ENCODE measurements at regions of chr5 and their contacts with region 1.

Region 1: GRCh38 chr5:172833686-172834414 is at the start of gene ERGIC1:
- DNase-seq: peak; percentile 82
- H3K4me3 ChIP-seq: peak within 1 kb of the TSS; percentile 80 to 96 (median 80)
- H3K27ac ChIP-seq: peak within 1 kb of the TSS; percentile 71
- H3K4me1 ChIP-seq: peaks cover 12% of the 10 kb centered on the region
- H3K27me3 ChIP-seq: no peaks in the 10 kb centered on the region
- CTCF ChIP-seq: no peak
- POLR2A ChIP-seq: peak; percentile 72
- total RNA-seq, gene ERGIC1: 105 and 118 TPM in 2 replicates

Region 2: DNA sequence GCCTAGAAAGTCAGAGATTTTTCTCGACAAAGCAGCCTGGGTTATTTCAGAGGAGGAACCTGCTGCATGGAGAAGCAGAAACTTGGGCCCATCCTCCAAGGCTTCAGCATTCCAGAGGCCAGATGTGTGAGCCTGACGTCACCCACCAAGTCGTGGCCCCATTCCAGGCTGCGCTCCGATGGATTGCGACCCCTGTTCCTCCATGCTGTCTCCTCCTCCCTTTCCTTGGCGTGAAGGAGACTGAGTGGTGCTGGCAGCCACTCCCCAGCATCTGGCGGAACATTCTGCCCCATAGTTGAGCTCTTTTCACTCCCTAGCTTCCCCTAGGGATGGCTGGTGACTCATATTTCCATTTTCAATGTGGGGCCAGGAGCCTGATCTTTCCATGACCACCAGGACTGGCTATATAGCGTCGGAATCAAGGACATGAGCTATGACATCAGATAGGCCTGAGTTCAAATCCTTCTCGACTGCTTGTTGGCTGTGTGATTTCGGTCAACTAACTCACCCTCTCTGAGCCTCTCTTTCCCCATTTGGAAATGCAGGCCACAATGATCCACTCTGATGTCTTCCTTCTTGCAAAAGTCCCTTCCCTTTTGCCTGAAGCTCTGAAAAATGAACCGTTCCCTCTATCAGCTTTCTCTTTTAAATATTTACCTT is 38.4 kb before region 1 on chr5:
- CTCF ChIA-PET with region 1: interaction called, 4 read pairs
- POLR2A ChIA-PET with region 1: no interaction called
- dilution Hi-C with region 1: no loop called
- intact Hi-C with region 1: loop called (anchors 1 kb)
- DNase-seq: peak; percentile 96
- H3K4me3 ChIP-seq: no peak overlapping the region
- H3K27ac ChIP-seq: peak overlapping the region; percentile 76
- H3K4me1 ChIP-seq: peaks cover 48% of the 10 kb centered on the region
- H3K27me3 ChIP-seq: no peaks in the 10 kb centered on the region
- CTCF ChIP-seq: no peak
- POLR2A ChIP-seq: no peak

Region 3: DNA sequence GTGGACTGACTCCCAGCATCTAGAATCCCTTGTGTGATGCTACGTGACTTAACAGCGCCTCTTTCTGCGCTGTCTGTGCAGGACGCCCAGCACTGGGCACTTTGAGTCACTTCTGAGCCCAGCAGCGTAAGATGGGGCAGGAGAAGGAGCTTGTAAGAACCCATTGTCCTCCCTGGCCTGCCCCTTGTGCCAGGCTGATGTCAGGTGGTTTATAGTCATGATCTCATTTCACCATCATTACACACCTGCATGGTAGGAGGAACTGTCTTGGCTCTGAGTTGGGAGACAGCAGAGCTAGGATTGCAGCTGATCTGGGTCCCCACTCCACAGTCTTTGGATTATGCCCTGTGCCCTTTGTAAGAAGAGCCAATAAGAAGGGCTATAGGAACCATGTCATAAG is 12.4 kb after region 1 on chr5:
- CTCF ChIA-PET with region 1: interaction called, 4 read pairs
- POLR2A ChIA-PET with region 1: no interaction called
- dilution Hi-C with region 1: no loop called
- intact Hi-C with region 1: loop called (anchors 1 kb)
- DNase-seq: no peak
- H3K4me3 ChIP-seq: no peak overlapping the region
- H3K27ac ChIP-seq: no peak overlapping the region
- H3K4me1 ChIP-seq: peaks cover 8% of the 10 kb centered on the region
- H3K27me3 ChIP-seq: no peaks in the 10 kb centered on the region
- CTCF ChIP-seq: no peak
- POLR2A ChIP-seq: no peak

Region 4: GRCh38 chr5:172910828-172911627 is 77.2 kb after region 1 on chr5:
- CTCF ChIA-PET with region 1: no interaction called
- POLR2A ChIA-PET with region 1: no interaction called
- dilution Hi-C with region 1: no loop called
- intact Hi-C with region 1: loop called (anchors 2 kb)
- DNase-seq: peak; percentile 90
- H3K4me3 ChIP-seq: no peak overlapping the region
- H3K27ac ChIP-seq: peak overlapping the region; percentile 89
- H3K4me1 ChIP-seq: peaks cover 15% of the 10 kb centered on the region
- H3K27me3 ChIP-seq: no peaks in the 10 kb centered on the region
- CTCF ChIP-seq: peak; percentile 60 to 75
- POLR2A ChIP-seq: peak; percentile 42

Measured in endothelial cell of umbilical vein (primary cell).